IMR-90 (cell line): ENCODE measurements at regions of chr20 and their contacts with region 1.

Region 1: GRCh38 chr20:22729180-22729579 is 144.8 kb upstream of the FOXA2 start:
- DNase-seq: no peak
- ATAC-seq: no peak
- H3K4me3 ChIP-seq: no peak overlapping the region
- H3K27ac ChIP-seq: no peak overlapping the region
- H3K4me1 ChIP-seq: no peaks in the 10 kb centered on the region
- H3K27me3 ChIP-seq: peaks cover 2% of the 10 kb centered on the region; the same call in 1 of the 2 replicates
- CTCF ChIP-seq: no peak
- POLR2A ChIP-seq: no peak
- RAD21 ChIP-seq: no peak

Region 2: DNA sequence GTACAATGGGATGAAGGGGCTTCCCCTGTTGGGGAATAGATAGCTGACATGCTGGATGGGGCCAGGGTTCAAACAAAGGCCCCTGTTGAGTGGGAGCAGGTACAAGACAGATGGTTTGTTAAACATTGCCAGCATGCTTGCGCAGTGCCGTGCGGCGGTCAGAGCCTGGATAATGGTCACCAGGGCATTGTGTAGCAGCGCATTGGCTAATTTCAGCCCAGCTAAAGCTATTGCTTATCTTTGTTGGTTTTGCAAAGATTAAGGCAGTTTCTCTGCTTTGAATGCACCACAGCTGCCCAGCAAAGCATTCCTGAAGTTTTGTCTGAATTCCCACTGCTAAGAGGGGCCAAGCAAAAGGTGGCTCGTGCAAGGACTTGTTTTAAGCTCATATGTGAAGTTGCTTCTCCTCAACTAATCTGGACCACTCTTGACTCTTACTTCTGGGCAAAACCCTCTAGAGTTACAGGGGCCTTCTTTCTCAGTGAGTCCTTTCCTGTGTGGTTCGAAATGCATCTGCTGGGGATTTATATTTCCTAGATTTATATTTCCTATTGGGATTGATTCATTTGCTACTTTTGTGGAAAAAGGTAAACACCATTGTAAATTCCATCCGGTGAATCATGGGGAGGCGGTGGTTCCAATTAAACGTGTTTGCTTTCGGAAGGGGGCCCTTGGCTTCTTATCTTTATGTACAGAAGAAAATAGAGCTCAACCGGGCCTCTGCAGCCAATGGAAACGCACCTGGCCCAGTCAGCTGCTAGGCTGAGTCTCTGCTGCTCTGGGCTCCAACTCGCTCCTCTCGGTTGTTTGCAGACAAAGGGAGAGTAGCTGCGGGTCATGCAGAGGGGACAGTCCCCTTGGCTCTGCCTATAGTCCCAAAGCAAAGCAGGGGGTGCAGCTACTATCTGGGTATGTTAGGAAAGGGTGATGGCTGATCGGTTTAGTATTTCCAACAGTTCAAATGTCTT is 217.0 kb before region 1 on chr20:
- CTCF ChIA-PET with region 1: no interaction called
- POLR2A ChIA-PET with region 1: no interaction called
- dilution Hi-C with region 1: no loop called
- in situ Hi-C with region 1: no loop called
- intact Hi-C with region 1: no loop called
- DNase-seq: no peak
- ATAC-seq: no peak
- H3K4me3 ChIP-seq: no peak overlapping the region
- H3K27ac ChIP-seq: no peak overlapping the region
- H3K4me1 ChIP-seq: no peaks in the 10 kb centered on the region
- H3K27me3 ChIP-seq: no peaks in the 10 kb centered on the region
- CTCF ChIP-seq: no peak
- POLR2A ChIP-seq: no peak
- RAD21 ChIP-seq: no peak

Region 3: GRCh38 chr20:22711987-22712755 is 17.0 kb before region 1 on chr20:
- CTCF ChIA-PET with region 1: no interaction called
- POLR2A ChIA-PET with region 1: no interaction called
- dilution Hi-C with region 1: no loop called
- in situ Hi-C with region 1: no loop called
- intact Hi-C with region 1: no loop called
- DNase-seq: no peak
- ATAC-seq: no peak
- H3K4me3 ChIP-seq: no peak overlapping the region
- H3K27ac ChIP-seq: no peak overlapping the region
- H3K4me1 ChIP-seq: 0 out of 2 replicates have a peak, but pooled peaks cover 2% of the 10 kb centered on the region
- H3K27me3 ChIP-seq: no peaks in the 10 kb centered on the region
- CTCF ChIP-seq: no peak
- POLR2A ChIP-seq: no peak
- RAD21 ChIP-seq: no peak

Region 4: DNA sequence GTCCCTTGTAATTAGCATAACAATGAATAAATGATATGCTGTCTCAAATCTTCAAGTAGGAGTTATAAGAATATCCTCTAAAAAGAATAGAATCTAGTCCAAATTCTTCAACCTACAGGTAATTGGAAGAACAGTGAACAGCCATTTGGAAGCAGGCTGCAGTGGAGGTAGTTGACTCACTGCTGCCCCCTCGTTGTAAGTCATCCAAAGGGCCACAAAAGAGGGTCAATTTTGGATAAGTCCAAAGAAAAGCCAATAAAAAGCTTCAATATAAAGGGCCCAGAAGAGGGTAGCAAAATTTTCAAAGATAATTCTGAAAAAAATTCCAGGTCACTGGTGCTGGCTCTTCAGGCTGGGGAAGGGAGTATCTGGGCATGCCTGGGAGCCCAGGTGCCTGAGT is 245.2 kb after region 1 on chr20:
- CTCF ChIA-PET with region 1: no interaction called
- POLR2A ChIA-PET with region 1: no interaction called
- dilution Hi-C with region 1: no loop called
- in situ Hi-C with region 1: no loop called
- intact Hi-C with region 1: loop called (anchors 10 kb)
- DNase-seq: no peak
- ATAC-seq: no peak
- H3K4me3 ChIP-seq: no peak overlapping the region
- H3K27ac ChIP-seq: no peak overlapping the region
- H3K4me1 ChIP-seq: no peaks in the 10 kb centered on the region
- H3K27me3 ChIP-seq: peaks cover 3% of the 10 kb centered on the region
- CTCF ChIP-seq: peak; percentile 33
- POLR2A ChIP-seq: no peak
- RAD21 ChIP-seq: peak; percentile 47

Region 5: GRCh38 chr20:23061734-23062561 is 332.8 kb after region 1 on chr20:
- CTCF ChIA-PET with region 1: no interaction called
- POLR2A ChIA-PET with region 1: no interaction called
- dilution Hi-C with region 1: no loop called
- in situ Hi-C with region 1: no loop called
- intact Hi-C with region 1: no loop called
- DNase-seq: peak; percentile 57
- ATAC-seq: peak; percentile 85
- H3K4me3 ChIP-seq: no peak overlapping the region
- H3K27ac ChIP-seq: no peak overlapping the region
- H3K4me1 ChIP-seq: peaks cover 10% of the 10 kb centered on the region; the same call in 1 of the 2 replicates
- H3K27me3 ChIP-seq: peaks cover 28% of the 10 kb centered on the region
- CTCF ChIP-seq: peak; percentile 43
- POLR2A ChIP-seq: no peak
- RAD21 ChIP-seq: peak; percentile 56